ENCODE measurements at regions of chr10 and their contacts with region 1.

Region 1: GRCh38 chr10:70381471-70382421 is 679 bp downstream of the LRRC20 start:
- DNase-seq: peak; percentile 55
- H3K4me3 ChIP-seq: peak overlapping the region; percentile 51 to 88 (median 82)
- H3K27ac ChIP-seq: peak overlapping the region; percentile 41
- H3K4me1 ChIP-seq: peaks cover 32% of the 10 kb centered on the region
- H3K27me3 ChIP-seq: peaks cover 0 to 3% of the 10 kb centered on the region in 2 experiments
- CTCF ChIP-seq: no peak
- POLR2A ChIP-seq: peak; percentile 57

Region 2: DNA sequence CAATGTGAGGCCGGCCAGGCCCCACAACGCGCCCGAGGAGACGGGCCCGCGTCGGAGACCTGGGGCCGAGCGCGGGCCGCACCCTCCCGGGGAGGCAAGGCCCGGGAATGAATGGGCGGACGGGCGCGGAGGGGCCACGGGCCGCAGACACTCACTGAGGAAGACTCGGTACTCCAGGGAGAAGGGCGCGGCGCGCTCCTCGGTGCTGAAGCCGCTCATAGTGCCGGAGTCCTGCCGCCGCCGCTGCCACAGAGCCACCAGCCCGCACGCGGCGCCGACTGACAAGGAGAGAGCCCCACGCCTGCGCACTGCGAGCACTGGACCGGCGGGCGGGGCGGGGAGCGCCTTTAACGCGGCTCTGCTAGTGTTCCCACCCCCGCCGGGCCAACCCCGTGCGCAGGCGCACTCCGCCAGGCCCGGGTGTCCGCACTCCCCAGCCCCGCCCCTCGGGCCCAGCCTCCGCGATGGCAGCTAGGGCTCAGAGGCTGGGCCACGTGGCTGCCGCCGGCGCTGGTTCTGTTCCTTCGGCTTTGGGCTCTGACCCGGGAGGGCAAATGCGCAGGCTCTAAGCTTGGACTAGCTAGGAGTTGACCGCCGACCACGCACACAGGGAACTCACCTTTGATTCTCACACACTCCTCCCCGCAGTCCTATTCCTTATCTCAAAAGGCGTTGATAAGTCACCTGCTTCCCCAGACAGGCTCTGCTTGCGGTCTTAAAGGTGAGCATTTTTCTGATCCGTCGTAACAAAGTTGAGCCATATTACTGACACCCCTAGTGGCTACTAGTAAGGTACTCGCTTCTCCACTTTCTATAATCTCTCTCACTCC is 148.4 kb before region 1 on chr10 and contains the start of gene PPA1:
- CTCF ChIA-PET with region 1: no interaction called
- POLR2A ChIA-PET with region 1: no interaction called
- dilution Hi-C with region 1: no loop called
- intact Hi-C with region 1: loop called (anchors 5 kb)
- DNase-seq: peak; percentile 96
- H3K4me3 ChIP-seq: peak within 1 kb of the TSS; percentile 72 to 91 (median 80)
- H3K27ac ChIP-seq: peak within 1 kb of the TSS; percentile 58
- H3K4me1 ChIP-seq: peaks cover 11% of the 10 kb centered on the region
- H3K27me3 ChIP-seq: no peaks in the 10 kb centered on the region
- CTCF ChIP-seq: peak in 1 of 2 donors; percentile 9
- POLR2A ChIP-seq: peak; percentile 95
- total RNA-seq, gene PPA1: 115 and 140 TPM in 2 replicates

Region 3: GRCh38 chr10:70331486-70332268 is 50.1 kb before region 1 on chr10:
- CTCF ChIA-PET with region 1: no interaction called
- POLR2A ChIA-PET with region 1: interaction called, 3 read pairs
- dilution Hi-C with region 1: no loop called
- intact Hi-C with region 1: loop called (anchors 2 kb)
- DNase-seq: peak; percentile 71
- H3K4me3 ChIP-seq: no peak overlapping the region
- H3K27ac ChIP-seq: no peak overlapping the region
- H3K4me1 ChIP-seq: peaks cover 8% of the 10 kb centered on the region
- H3K27me3 ChIP-seq: peaks cover 22 to 26% of the 10 kb centered on the region in 2 experiments
- CTCF ChIP-seq: peak in 1 of 2 donors; percentile 11
- POLR2A ChIP-seq: no peak

Region 4: GRCh38 chr10:70404036-70404786 is 22.5 kb after region 1 on chr10 and contains the start of gene EIF4EBP2:
- CTCF ChIA-PET with region 1: interaction called, 43 read pairs
- POLR2A ChIA-PET with region 1: interaction called, 9 read pairs
- dilution Hi-C with region 1: no loop called
- intact Hi-C with region 1: loop called (anchors 1 kb)
- DNase-seq: peak; percentile 99
- H3K4me3 ChIP-seq: peak within 1 kb of the TSS; percentile 64 to 83 (median 79)
- H3K27ac ChIP-seq: peak within 1 kb of the TSS; percentile 42
- H3K4me1 ChIP-seq: peaks cover 28% of the 10 kb centered on the region
- H3K27me3 ChIP-seq: no peaks in the 10 kb centered on the region
- CTCF ChIP-seq: no peak
- POLR2A ChIP-seq: peak; percentile 90
- total RNA-seq, gene EIF4EBP2: 46.6 and 47.0 TPM in 2 replicates

Region 5: GRCh38 chr10:70437721-70438120 is 56.0 kb after region 1 on chr10:
- CTCF ChIA-PET with region 1: no interaction called
- POLR2A ChIA-PET with region 1: no interaction called
- dilution Hi-C with region 1: no loop called
- intact Hi-C with region 1: no loop called
- DNase-seq: no peak
- H3K4me3 ChIP-seq: no peak overlapping the region
- H3K27ac ChIP-seq: no peak overlapping the region
- H3K4me1 ChIP-seq: no peaks in the 10 kb centered on the region
- H3K27me3 ChIP-seq: peaks cover 33 to 47% of the 10 kb centered on the region in 2 experiments
- CTCF ChIP-seq: no peak
- POLR2A ChIP-seq: no peak

Region 6: DNA sequence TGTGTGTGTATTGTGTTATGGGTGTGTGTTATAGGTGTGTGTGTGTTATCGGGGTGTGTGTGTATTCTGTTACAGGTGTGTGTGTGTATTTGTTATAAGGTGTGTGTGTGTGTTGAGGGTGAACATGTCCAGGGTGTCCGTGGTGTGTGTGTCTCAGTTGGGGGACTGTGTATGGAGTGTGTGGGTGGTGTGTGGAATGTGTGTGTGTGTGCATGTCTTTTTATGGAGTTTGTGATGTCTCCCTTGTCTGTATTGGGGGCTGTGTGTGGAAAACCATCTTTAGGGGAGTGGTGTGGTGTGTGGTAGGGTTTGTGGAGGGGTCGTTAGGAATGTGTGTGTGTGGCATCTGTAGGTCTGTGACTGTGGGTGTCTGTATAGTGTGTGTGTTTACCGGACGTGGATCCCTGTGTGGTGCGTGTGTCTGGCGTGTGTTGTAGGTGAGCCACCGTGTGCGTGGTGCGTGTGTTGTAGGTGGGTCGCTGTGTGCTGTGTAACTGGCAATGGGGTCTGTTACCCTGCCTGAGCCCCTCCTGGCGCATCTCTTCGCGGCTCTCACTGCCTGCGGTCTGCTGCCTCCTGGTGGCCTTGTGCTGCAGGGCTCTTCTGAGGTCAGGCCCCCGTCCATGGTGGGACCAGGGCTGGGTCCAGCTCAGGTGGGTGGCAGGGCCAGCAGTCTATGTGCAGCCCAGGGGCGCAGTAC is 158.5 kb after region 1 on chr10:
- CTCF ChIA-PET with region 1: no interaction called
- POLR2A ChIA-PET with region 1: no interaction called
- dilution Hi-C with region 1: no loop called
- intact Hi-C with region 1: loop called (anchors 1 kb)
- DNase-seq: peak; percentile 24
- H3K4me3 ChIP-seq: no peak overlapping the region
- H3K27ac ChIP-seq: no peak overlapping the region
- H3K4me1 ChIP-seq: no peaks in the 10 kb centered on the region
- H3K27me3 ChIP-seq: no peaks in the 10 kb centered on the region
- CTCF ChIP-seq: peak; percentile 78 to 84
- POLR2A ChIP-seq: no peak

Region 7: DNA sequence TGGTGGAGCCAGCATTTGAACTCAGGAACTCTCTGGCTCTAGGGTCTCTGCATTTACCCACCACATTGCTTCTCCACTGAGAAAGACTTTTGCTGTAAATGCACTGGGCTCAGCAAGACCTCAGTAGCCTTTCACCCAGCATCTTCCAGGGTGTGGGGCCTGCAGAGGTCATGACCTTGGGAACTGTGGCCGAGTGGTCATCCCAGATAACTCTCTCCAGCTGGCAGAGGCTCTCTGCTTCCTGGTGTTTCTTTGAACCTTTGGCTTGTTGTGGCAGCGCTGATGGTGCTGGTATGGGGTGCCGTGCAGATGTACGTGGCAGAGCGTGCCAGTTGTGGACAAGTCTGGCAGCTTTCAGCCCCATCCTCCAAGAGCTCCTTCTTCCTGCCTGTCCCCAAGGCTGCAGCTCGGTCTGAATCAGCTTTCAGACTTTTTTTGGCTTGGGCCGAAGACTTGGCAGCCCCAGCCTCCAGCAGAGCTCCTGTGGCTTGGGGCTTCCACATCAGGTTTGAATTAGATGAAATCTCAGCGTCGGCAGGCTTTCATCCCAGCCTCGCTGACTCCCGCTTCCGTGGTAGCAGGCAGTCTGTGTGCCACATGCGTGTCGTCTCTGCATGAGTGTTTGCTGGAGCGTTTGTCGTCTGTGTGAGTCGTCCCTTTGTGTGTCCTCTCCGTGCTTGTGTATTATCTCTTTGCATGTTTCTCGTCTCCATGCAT is 312.0 kb after region 1 on chr10:
- CTCF ChIA-PET with region 1: no interaction called
- POLR2A ChIA-PET with region 1: no interaction called
- dilution Hi-C with region 1: no loop called
- intact Hi-C with region 1: no loop called
- DNase-seq: no peak
- H3K4me3 ChIP-seq: no peak overlapping the region
- H3K27ac ChIP-seq: no peak overlapping the region
- H3K4me1 ChIP-seq: no peaks in the 10 kb centered on the region
- H3K27me3 ChIP-seq: peaks cover 0 to 6% of the 10 kb centered on the region in 2 experiments
- CTCF ChIP-seq: no peak
- POLR2A ChIP-seq: no peak

Region 8: DNA sequence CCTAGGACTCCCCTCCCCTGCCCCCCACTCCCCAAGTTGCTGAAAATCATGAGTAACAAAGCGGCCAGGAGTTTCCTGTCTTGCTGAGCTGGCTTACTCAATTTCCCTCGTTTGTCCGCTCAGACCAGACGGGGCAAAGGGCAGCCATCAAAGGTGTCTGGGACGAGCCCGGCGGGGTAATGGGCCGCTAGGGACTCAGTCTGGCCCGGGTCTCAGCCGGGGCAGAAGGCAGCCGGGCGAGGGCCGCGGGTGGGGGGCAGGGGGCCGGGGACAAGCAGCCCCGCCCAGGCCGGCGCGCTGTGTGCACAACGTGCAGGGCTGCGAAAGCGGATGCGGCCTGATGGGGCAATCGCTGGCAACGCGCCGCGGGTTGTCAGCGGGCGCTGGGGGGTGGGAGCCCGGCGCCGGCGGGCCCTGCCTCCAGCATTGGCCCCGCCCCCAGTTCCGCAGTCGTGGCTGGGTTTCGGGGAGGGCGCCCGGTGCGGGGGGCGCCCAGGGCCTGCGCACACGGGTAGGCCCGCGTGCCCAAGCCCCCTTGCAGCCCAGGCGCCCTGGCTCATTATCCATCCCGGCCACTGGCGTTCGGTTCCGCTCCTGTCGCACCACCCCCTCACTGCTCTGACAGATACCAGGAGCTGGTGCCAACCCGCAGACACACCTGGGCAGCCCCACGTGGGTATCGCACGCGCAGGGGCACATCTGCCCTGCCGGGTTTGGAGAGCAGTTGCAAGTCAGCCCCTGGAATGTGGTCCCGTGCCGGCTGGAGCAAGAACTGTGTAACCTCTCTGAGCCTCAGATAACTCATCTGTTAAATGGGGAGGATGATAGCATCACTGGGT is 1937.9 kb after region 1 on chr10:
- CTCF ChIA-PET with region 1: no interaction called
- POLR2A ChIA-PET with region 1: no interaction called
- dilution Hi-C with region 1: no loop called
- intact Hi-C with region 1: no loop called
- DNase-seq: peak; percentile 98
- H3K4me3 ChIP-seq: no peak overlapping the region
- H3K27ac ChIP-seq: peak overlapping the region; percentile 100
- H3K4me1 ChIP-seq: peaks cover 69% of the 10 kb centered on the region
- H3K27me3 ChIP-seq: no peaks in the 10 kb centered on the region
- CTCF ChIP-seq: no peak
- POLR2A ChIP-seq: no peak